Prostate gland (tissue), 2 donors: ENCODE measurements at regions of chr14 and their contacts with region 1.

Region 1: DNA sequence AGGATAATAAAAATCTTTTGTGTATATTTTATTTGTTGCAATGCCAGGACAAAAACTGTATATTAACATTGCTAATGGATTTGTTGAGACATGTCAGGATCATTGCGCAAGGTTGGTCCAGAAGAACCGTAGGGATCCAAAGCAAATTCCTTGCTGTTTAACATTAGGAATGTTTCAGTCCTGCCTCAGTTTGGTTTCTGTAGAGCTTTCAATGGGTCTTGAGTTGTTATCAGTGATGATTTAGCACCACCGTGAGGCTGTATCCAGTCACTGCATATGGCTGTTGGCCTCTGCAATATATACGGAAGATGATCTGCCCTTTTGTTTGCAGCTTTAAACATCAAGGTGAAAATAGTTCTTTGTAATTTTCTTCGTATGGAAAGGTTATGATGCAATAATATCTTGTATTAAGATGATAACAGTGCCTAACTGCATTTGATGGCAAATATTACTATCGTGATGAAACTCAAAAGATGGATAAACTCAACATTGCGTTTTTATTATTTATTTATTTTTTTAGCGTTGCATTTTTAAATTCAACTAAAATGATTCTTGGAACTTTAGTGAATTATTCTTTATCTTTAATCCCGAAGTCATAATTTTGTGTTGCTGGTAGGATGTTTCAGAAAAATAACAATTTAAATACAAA is 231.2 kb downstream of the AKAP6 start:
- DNase-seq: peak; percentile 60
- H3K4me3 ChIP-seq: no peak overlapping the region
- H3K27ac ChIP-seq: no peak overlapping the region
- H3K4me1 ChIP-seq: peaks cover 3% of the 10 kb centered on the region
- H3K27me3 ChIP-seq: no peaks in the 10 kb centered on the region
- CTCF ChIP-seq: peak; percentile 61 to 92 (median 75)
- POLR2A ChIP-seq: no peak

Region 2: GRCh38 chr14:31937721-31938346 is 622.5 kb before region 1 on chr14:
- intact Hi-C with region 1: loop called (anchors 10 kb)
- DNase-seq: no peak
- H3K4me3 ChIP-seq: no peak overlapping the region
- H3K27ac ChIP-seq: no peak overlapping the region
- H3K4me1 ChIP-seq: no peaks in the 10 kb centered on the region
- H3K27me3 ChIP-seq: no peaks in the 10 kb centered on the region
- CTCF ChIP-seq: no peak
- POLR2A ChIP-seq: no peak

Region 3: DNA sequence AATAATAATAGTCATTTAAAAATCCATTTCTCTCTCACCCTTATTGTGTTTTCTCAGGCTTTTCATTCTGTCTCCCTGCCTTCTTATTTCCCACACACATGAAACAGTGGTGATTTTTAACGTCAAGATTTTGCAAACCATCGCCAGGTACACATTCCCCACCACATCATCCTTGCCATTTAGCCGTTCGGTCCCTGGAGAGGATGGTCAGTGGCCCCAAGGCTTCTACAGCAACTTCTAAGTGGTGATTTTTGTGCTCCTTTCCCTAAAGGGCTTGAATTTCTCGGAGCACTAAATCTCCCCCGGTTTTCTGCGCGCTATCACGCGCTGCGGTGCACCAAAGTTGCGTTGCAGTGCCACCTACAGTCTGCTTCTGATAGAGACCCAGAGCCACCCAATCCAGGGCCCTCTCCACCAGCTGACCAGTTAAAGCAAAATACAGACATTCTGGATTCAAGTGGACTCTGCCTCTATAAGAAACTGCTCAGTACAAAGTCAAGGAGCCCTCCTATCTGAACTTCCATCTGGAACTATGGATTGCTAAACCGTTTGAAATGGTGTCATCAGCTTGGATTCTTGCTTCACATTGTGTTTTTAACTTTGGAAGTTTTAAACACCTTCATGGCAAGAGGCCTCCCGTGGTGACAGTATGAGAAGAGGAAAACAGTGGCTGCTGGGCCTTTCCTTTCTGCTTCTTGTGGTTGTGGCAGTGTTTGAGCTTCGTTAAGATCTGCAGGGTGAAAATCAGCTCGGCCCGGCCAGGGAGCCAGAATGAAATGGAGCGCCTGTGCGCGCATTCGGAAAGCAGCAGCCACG is 1667.7 kb after region 1 on chr14:
- intact Hi-C with region 1: loop called (anchors 5 kb)
- DNase-seq: peak; percentile 56
- H3K4me3 ChIP-seq: no peak overlapping the region
- H3K27ac ChIP-seq: no peak overlapping the region
- H3K4me1 ChIP-seq: no peaks in the 10 kb centered on the region
- H3K27me3 ChIP-seq: no peaks in the 10 kb centered on the region
- CTCF ChIP-seq: peak; percentile 36 to 84 (median 72)
- POLR2A ChIP-seq: no peak